ENCODE measurements at regions of chr4 and their contacts with region 1.

Region 1: GRCh38 chr4:106486533-106486932 is 118.0 kb upstream of the GIMD1 start:
- DNase-seq: no peak
- ATAC-seq: no peak
- H3K4me3 ChIP-seq: no peak overlapping the region
- H3K27ac ChIP-seq: no peak overlapping the region
- H3K4me1 ChIP-seq: no peaks in the 10 kb centered on the region
- H3K27me3 ChIP-seq: peaks cover 0 to 10% (median 0%) of the 10 kb centered on the region in 9 donors
- CTCF ChIP-seq: no peak
- POLR2A ChIP-seq: no peak

Region 2: DNA sequence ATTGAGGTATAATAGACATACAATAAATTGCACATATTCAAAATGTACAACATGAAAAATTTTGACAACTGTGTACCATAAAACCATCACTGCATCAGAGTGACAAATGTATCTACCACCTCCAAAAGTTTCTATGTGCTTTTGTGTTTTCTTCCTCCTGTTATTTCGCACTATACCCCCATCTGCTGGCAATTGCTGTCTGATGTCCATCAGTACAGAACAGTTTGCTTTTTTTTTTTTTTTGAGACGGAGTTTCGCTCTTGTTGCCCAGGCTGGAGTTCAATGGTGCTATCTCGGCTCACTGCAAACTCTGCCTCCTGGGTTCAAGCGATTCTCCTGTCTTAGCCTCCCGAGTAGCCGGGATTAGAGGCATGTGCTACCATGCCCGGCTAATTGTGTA is 36.3 kb after region 1 on chr4:
- intact Hi-C with region 1: loop called in 1 of 10 experiments (anchors 5 kb)
- DNase-seq: no peak
- ATAC-seq: no peak
- H3K4me3 ChIP-seq: no peak overlapping the region
- H3K27ac ChIP-seq: no peak overlapping the region
- H3K4me1 ChIP-seq: no peaks in the 10 kb centered on the region
- H3K27me3 ChIP-seq: peaks cover 0 to 10% (median 0%) of the 10 kb centered on the region in 9 donors
- CTCF ChIP-seq: no peak
- POLR2A ChIP-seq: no peak

Measured in heart left ventricle (tissue), 16 donors.